ENCODE measurements at regions of chr12 and their contacts with region 1.

Region 1: DNA sequence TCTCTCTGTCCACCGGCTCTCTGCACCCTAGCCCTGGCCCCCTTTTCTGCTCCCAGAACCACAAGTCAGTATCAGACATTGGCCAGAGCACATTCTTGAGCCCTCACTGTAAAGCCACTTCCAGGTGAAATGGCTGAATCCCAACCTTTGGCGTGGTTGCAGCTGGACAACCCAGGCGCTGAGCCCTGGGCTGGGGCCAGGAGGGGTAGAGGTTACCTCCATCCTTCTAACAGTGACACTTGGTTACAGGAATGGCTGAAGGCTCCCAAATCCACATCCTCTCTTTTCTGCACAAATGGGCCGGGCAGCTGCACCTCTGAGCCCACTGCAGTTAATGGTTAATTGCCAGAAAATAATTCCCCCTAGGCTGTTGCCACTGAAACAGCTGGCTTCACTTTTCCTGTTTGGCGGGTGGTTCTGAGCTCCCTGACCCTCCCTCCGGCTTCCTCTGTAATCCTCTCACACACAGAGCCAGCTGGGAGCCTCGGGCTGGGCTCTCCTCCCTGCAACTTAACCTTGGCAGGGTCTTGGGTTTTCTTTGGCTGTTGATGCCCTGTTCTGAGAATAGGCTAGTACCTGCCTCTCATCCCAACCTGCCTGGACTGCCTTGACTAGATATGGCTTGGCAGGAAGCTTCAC is 44.1 kb downstream of the TSPAN11 start:
- DNase-seq: no peak
- H3K4me3 ChIP-seq: no peak overlapping the region
- H3K27ac ChIP-seq: no peak overlapping the region
- H3K4me1 ChIP-seq: no peaks in the 10 kb centered on the region
- H3K27me3 ChIP-seq: peaks cover 8% of the 10 kb centered on the region
- CTCF ChIP-seq: no peak

Region 2: DNA sequence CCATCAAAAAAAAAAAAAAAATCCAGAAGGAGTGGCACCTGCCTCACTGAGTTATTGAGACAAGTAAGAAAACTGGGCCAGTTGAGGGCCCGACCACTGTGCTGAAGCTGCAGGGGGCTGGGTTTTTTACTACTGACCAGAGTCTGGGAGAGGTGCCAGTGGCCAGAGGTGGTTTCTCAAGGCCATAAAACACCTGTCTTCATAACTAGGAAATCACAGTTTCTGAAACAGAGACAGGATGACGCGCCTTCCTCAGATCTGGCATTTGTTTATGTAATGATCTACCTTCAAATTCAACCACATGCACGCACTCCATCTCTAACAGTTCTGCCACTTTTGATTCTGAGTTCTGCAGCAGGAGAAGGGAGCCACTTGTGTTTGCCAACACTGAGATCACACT is 31.4 kb before region 1 on chr12:
- CTCF ChIA-PET with region 1: no interaction called
- dilution Hi-C with region 1: loop called (anchors 5 kb)
- in situ Hi-C with region 1: no loop called
- intact Hi-C with region 1: no loop called
- DNase-seq: no peak
- H3K4me3 ChIP-seq: no peak overlapping the region
- H3K27ac ChIP-seq: no peak overlapping the region
- H3K4me1 ChIP-seq: no peaks in the 10 kb centered on the region
- H3K27me3 ChIP-seq: peaks cover 8% of the 10 kb centered on the region
- CTCF ChIP-seq: no peak

Measured in mammary epithelial cell (primary cell).